ENCODE measurements at regions of chr3 and their contacts with region 1.

Region 1: GRCh38 chr3:146892041-146892440 is 286.9 kb upstream of the PLSCR5 start:
- DNase-seq: no peak
- ATAC-seq: no peak
- H3K4me3 ChIP-seq: no peak overlapping the region
- H3K27ac ChIP-seq: no peak overlapping the region
- H3K4me1 ChIP-seq: no peaks in the 10 kb centered on the region
- H3K27me3 ChIP-seq: no peaks in the 10 kb centered on the region
- CTCF ChIP-seq: no peak

Region 2: GRCh38 chr3:146845361-146845760 is 46.7 kb before region 1 on chr3:
- intact Hi-C with region 1: loop called in 1 of 2 experiments (anchors 2 kb)
- DNase-seq: no peak
- ATAC-seq: no peak
- H3K4me3 ChIP-seq: no peak overlapping the region
- H3K27ac ChIP-seq: no peak overlapping the region
- H3K4me1 ChIP-seq: no peaks in the 10 kb centered on the region
- H3K27me3 ChIP-seq: no peaks in the 10 kb centered on the region
- CTCF ChIP-seq: no peak

Measured in psoas muscle (tissue), 8 donors.